Activated naive CD4-positive, alpha-beta T cell treated with anti-CD3 and anti-CD28 coated beads for 36 hours (primary cell): ENCODE measurements at regions of chr14 and their contacts with region 1.

Region 1: DNA sequence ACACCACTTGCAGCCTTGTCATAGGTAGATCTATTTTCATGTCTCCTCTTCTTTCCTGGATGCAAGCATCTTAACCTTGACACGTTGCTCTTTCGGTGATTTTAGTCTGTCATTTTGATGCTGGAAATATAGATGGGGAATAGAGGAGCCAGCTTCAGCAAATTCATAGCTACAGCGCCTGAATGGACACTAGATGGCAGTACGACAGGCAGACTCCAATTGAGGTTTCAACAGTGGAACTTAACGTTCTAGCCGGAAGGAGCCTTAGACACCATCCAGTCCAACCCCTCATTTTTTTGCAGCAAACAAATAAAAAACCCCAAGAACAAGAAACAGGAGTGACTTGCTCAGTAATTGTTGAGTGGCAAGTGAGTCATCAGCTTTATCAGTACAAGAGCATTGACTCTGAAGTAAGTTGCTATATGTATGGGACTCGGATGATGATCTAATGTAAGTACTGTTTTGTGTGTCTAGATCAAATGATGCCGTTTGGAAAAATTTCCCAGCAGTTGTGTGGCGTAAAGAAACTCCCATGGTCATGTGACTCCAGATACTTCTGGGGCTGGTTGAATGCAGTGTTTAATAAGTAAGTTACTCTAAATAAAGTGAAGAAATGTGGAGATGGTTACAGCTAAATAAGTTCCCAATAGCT is 9.0 kb downstream of the DMAC2L start:
- DNase-seq: peak; percentile 80
- H3K4me3 Mint-ChIP-seq: no peak overlapping the region
- H3K27ac Mint-ChIP-seq: no peak overlapping the region
- H3K4me1 Mint-ChIP-seq: peaks cover 25% of the 10 kb centered on the region
- H3K27me3 Mint-ChIP-seq: no peaks in the 10 kb centered on the region

Region 2: DNA sequence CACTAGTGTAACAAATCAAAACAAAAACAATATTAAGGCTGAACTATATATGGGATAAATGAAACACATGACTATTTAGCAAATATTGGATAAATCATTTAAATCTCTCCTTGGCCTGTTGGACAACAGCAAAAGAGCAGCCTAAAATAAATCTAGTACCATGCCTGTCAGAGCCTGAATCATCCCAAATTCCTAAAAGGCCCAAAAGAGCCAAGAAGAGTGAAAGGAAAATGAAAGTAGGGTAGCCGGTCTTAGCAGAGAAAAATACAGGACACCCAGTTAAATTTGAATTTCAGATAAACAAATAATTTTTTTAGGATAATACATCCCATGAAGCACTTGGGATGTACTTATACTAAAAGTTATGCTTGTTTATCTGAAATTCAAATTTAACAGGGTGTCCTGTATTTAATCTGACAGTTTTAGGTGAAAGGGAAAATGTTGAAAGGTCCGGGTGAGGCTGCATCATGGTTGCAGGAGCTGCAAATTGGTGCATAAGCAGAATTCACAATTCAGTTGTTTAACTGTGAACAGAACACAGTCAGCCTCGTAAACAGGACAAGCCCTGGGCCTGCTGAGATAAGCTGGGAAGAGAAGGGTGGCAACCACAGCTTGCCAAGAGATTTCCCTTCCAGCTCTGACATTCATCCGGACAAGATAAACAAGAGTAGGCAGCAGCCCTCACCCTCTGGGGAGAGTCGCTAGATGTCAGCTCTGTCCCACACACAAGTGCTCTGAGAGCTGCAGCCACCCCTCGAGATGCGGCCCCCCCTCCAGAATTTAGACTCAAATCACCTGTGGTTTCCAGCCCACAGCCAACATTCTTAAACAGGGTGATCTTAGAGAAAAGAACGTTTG is 21.3 kb after region 1 on chr14:
- CTCF ChIA-PET with region 1: interaction called, 14 read pairs
- intact Hi-C with region 1: loop called (anchors 1 kb)
- DNase-seq: peak; percentile 79
- H3K4me3 Mint-ChIP-seq: no peak overlapping the region
- H3K27ac Mint-ChIP-seq: no peak overlapping the region
- H3K4me1 Mint-ChIP-seq: peaks cover 26% of the 10 kb centered on the region
- H3K27me3 Mint-ChIP-seq: no peaks in the 10 kb centered on the region

Region 3: DNA sequence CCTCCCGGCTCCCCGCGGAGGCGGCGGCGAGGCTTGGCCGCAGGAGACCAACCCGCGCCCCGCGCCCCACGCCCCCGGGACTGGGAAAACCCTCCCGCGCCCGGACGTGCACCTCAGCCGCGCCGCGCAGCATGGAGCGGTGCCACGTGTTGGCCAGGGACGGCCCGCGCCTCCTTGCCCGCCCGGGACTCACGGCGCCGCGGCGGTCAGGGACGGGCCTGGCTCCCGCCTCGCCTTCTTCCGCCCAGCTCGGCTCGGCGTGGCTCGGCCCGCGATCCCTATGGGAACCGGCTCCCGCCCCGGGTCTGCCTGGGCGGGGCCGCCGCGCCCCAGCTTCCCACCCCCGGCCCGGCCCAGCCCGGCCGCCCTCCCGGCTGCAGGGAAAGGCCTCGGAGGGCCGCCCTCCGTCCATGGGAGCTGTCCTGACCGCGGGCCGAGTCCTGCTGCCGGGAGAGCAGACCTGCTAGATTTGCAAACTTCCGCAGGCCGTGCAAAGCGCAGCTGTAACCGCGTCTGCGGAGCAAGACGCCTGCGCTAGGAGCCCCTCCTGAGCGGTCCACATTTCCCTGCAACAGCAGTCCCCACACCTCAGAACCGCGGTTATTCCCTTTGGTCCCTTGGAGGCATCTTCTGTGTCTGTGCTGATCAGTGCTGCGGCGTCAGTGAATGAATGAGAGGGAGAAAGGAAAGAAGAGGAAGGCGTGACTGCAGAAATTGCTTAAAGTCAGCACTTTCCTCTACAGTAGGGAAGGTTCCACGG is 75.7 kb after region 1 on chr14 and contains the start of gene CDKL1:
- CTCF ChIA-PET with region 1: interaction called, 6 read pairs
- intact Hi-C with region 1: loop called (anchors 1 kb)
- DNase-seq: peak; percentile 53
- H3K4me3 Mint-ChIP-seq: peak within 1 kb of the TSS; percentile 83
- H3K27ac Mint-ChIP-seq: peak within 1 kb of the TSS; percentile 59
- H3K4me1 Mint-ChIP-seq: peaks cover 13% of the 10 kb centered on the region
- H3K27me3 Mint-ChIP-seq: peaks cover 2% of the 10 kb centered on the region
- total RNA-seq, gene CDKL1: 1.5 to 2.0 TPM

Region 4: GRCh38 chr14:50542941-50543418 is 221.8 kb after region 1 on chr14:
- CTCF ChIA-PET with region 1: interaction called, 26 read pairs
- intact Hi-C with region 1: no loop called
- DNase-seq: peak; percentile 54
- H3K4me3 Mint-ChIP-seq: no peak overlapping the region
- H3K27ac Mint-ChIP-seq: no peak overlapping the region
- H3K4me1 Mint-ChIP-seq: peaks cover 8% of the 10 kb centered on the region
- H3K27me3 Mint-ChIP-seq: no peaks in the 10 kb centered on the region

Region 5: GRCh38 chr14:50813544-50813863 is 492.4 kb after region 1 on chr14:
- CTCF ChIA-PET with region 1: no interaction called
- intact Hi-C with region 1: loop called (anchors 1 kb)
- DNase-seq: peak; percentile 45
- H3K4me3 Mint-ChIP-seq: peak overlapping the region; percentile 75
- H3K27ac Mint-ChIP-seq: peak overlapping the region; percentile 98
- H3K4me1 Mint-ChIP-seq: peaks cover 55% of the 10 kb centered on the region
- H3K27me3 Mint-ChIP-seq: no peaks in the 10 kb centered on the region